ENCODE measurements at regions of chr9 and their contacts with region 1.

Region 1: GRCh38 chr9:111909441-111909840 is 12.8 kb downstream of the UGCG start:
- DNase-seq: no peak
- ATAC-seq: peak; percentile 65
- H3K4me3 ChIP-seq: peak overlapping the region; percentile 36; the same call in 1 of the 2 replicates
- H3K27ac ChIP-seq: peak overlapping the region; percentile 70; the same call in 1 of the 2 replicates
- H3K4me1 ChIP-seq: peaks cover 62% of the 10 kb centered on the region
- H3K27me3 ChIP-seq: no peaks in the 10 kb centered on the region
- CTCF ChIP-seq: no peak
- EP300 ChIP-seq: no peak
- POLR2A ChIP-seq: no peak
- RAD21 ChIP-seq: no peak

Region 2: GRCh38 chr9:111896353-111896958 is 13.0 kb before region 1 on chr9 and contains the start of gene UGCG:
- CTCF ChIA-PET with region 1: interaction called, 3 read pairs
- POLR2A ChIA-PET with region 1: interaction called, 45 read pairs
- RAD21 ChIA-PET with region 1: interaction called, 27 read pairs
- SMC1A ChIA-PET with region 1: interaction called, 65 read pairs
- in situ Hi-C with region 1: no loop called
- intact Hi-C with region 1: no loop called
- DNase-seq: no peak
- ATAC-seq: peak; percentile 79
- H3K4me3 ChIP-seq: peak within 1 kb of the TSS; percentile 80
- H3K27ac ChIP-seq: peak within 1 kb of the TSS; percentile 93
- H3K4me1 ChIP-seq: no peaks in the 10 kb centered on the region; the same call in 1 of the 2 replicates
- H3K27me3 ChIP-seq: no peaks in the 10 kb centered on the region
- CTCF ChIP-seq: no peak
- EP300 ChIP-seq: 0 out of 4 replicates have a peak, but pooled peaks of 1 of the 2 experiments have one; percentile 14
- POLR2A ChIP-seq: peak; percentile 93
- RAD21 ChIP-seq: 0 out of 2 replicates have a peak, but pooled peaks have one; percentile 2
- polyA plus RNA-seq, gene UGCG: 48.0 to 62.1 TPM

Region 3: GRCh38 chr9:111937781-111938426 is 28.5 kb after region 1 on chr9:
- CTCF ChIA-PET with region 1: interaction called, 7 read pairs
- POLR2A ChIA-PET with region 1: interaction called, 24 read pairs
- RAD21 ChIA-PET with region 1: interaction called, 4 read pairs
- SMC1A ChIA-PET with region 1: interaction called, 51 read pairs
- in situ Hi-C with region 1: no loop called
- intact Hi-C with region 1: no loop called
- DNase-seq: peak; percentile 74
- ATAC-seq: peak; percentile 90
- H3K4me3 ChIP-seq: no peak overlapping the region
- H3K27ac ChIP-seq: peak overlapping the region; percentile 80
- H3K4me1 ChIP-seq: peaks cover 21% of the 10 kb centered on the region
- H3K27me3 ChIP-seq: no peaks in the 10 kb centered on the region
- CTCF ChIP-seq: no peak
- EP300 ChIP-seq: peak; percentile 68 to 77; a peak in 2 of 4 replicates
- POLR2A ChIP-seq: no peak; the same call in none of the 2 replicates
- RAD21 ChIP-seq: no peak

Region 4: GRCh38 chr9:112203536-112203935 is 294.1 kb after region 1 on chr9:
- CTCF ChIA-PET with region 1: no interaction called
- POLR2A ChIA-PET with region 1: no interaction called
- RAD21 ChIA-PET with region 1: no interaction called
- SMC1A ChIA-PET with region 1: no interaction called
- in situ Hi-C with region 1: no loop called
- intact Hi-C with region 1: no loop called
- DNase-seq: no peak
- ATAC-seq: no peak
- H3K4me3 ChIP-seq: no peak overlapping the region
- H3K27ac ChIP-seq: no peak overlapping the region
- H3K4me1 ChIP-seq: no peaks in the 10 kb centered on the region
- H3K27me3 ChIP-seq: no peaks in the 10 kb centered on the region
- CTCF ChIP-seq: no peak
- EP300 ChIP-seq: no peak
- POLR2A ChIP-seq: no peak
- RAD21 ChIP-seq: no peak